HAP-1 (cell line): ENCODE measurements at regions of chr14 and their contacts with region 1.

Region 1: GRCh38 chr14:75709207-75709812 is 48.3 kb downstream of the TTLL5 start:
- DNase-seq: peak; percentile 77 to 79
- H3K4me3 ChIP-seq: no peak overlapping the region
- H3K4me1 ChIP-seq: peaks cover 8% of the 10 kb centered on the region
- H3K27me3 ChIP-seq: no peaks in the 10 kb centered on the region

Region 2: GRCh38 chr14:74838166-74838565 is 871.1 kb before region 1 on chr14:
- in situ Hi-C with region 1: no loop called
- DNase-seq: no peak
- H3K4me3 ChIP-seq: no peak overlapping the region
- H3K4me1 ChIP-seq: peaks cover 6% of the 10 kb centered on the region; the same call in 1 of the 2 replicates
- H3K27me3 ChIP-seq: no peaks in the 10 kb centered on the region

Region 3: GRCh38 chr14:75982266-75983018 is 273.1 kb after region 1 on chr14:
- in situ Hi-C with region 1: loop called (anchors 5 kb)
- DNase-seq: peak; percentile 62 to 87
- H3K4me3 ChIP-seq: peak overlapping the region; percentile 50
- H3K4me1 ChIP-seq: peaks cover 8% of the 10 kb centered on the region
- H3K27me3 ChIP-seq: no peaks in the 10 kb centered on the region

Region 4: DNA sequence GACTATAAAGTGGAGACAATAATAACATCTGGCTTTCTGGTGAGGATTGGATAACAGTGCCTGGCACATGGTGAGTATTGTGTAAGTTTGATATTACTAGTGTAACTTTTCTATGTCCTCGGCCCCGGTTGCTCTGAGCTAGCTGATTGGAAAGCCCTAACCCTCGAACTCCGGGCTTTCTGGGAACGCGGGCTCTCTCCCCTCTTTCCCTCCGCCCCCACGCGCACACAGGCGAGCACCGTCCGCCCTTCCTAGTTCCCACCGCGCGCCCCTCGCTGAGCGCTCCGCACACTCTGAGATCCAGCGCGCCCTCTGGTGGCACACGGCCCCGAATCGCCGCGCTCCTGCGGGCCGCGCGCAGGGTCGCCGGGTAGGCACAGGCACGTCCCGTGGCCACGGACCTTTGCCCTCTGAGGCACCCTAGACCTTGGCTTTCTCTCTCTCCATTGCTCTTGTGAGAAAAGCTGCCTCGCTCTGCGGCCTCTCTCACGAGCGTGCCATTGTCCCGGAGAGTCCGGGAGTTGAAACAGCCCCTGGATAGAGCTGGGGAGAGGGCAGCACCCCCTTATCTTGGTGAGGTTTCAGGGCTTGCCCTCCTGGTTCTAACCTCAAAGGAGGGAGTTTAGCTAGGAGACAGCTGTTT is 643.5 kb after region 1 on chr14:
- in situ Hi-C with region 1: loop called (anchors 25 kb)
- DNase-seq: peak; percentile 40 to 87
- H3K4me3 ChIP-seq: no peak overlapping the region
- H3K4me1 ChIP-seq: no peaks in the 10 kb centered on the region
- H3K27me3 ChIP-seq: no peaks in the 10 kb centered on the region; the same call in 1 of the 2 replicates